Activated naive CD4-positive, alpha-beta T cell treated with anti-CD3 and anti-CD28 coated beads for 36 hours (primary cell): ENCODE measurements at regions of chr17 and their contacts with region 1.

Region 1: DNA sequence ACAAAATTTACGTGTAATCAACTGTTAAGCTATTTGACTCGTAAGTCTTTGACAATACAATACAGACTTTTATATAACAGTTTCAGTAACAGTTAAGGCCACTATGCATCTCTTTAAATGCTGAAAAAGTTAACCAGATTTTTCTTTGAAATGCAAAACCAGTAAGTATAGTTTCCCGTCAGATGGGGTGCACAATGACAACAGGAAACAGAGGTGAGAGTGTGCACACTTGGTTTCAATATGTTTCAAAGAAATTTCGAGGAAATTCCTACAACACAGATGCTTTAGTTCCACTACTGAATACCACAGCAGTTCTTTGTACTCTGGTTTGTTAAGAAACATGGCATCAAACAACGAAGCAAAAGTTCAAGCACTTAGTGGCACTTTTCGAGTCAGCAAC is 48.4 kb downstream of the RNF157 start:
- DNase-seq: peak; percentile 73
- H3K4me3 Mint-ChIP-seq: peak overlapping the region; percentile 66
- H3K27ac Mint-ChIP-seq: peak overlapping the region; percentile 98
- H3K4me1 Mint-ChIP-seq: peaks cover 87% of the 10 kb centered on the region
- H3K27me3 Mint-ChIP-seq: no peaks in the 10 kb centered on the region

Region 2: GRCh38 chr17:76072148-76072858 is 119.6 kb before region 1 on chr17 and contains the start of gene SRP68:
- CTCF ChIA-PET with region 1: no interaction called
- intact Hi-C with region 1: loop called (anchors 1 kb)
- DNase-seq: peak; percentile 86
- H3K4me3 Mint-ChIP-seq: peak within 1 kb of the TSS; percentile 95
- H3K27ac Mint-ChIP-seq: peak within 1 kb of the TSS; percentile 98
- H3K4me1 Mint-ChIP-seq: peaks cover 49% of the 10 kb centered on the region
- H3K27me3 Mint-ChIP-seq: peaks cover 33% of the 10 kb centered on the region
- total RNA-seq, gene SRP68: 127 to 131 TPM

Region 3: DNA sequence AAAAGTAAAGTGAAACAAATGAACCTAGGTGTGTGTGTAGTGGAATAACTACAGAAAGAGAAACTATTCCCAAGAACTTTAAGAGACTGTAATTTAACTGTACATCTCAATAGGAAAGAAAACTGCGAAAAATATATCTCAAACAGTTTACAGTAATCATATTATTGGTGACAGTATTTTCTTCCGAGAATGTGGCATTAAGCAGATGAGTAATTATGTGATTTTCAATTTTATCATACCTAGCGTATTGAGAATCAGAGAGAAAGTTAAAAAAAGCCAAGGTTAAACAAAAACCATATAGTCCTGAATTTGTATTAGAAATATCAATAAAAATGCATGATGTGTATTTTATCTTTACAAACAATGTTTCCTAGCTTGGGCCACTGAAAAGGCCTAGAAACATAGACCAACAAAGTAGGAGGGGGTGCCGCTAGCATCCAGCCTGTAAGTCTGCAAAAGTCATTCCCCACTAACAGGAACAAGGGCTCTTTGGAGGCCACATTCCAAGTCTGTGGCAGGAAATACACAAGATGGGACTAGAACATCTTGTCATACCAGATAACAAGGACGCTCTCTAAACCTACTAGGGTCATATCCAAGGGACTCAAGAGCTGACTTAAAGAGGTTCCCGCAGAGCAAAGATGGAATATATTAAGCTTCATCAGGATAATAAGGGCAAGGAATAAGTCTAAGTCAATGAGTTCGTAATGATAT is 27.9 kb after region 1 on chr17:
- CTCF ChIA-PET with region 1: interaction called, 10 read pairs
- intact Hi-C with region 1: loop called (anchors 2 kb)
- DNase-seq: no peak
- H3K4me3 Mint-ChIP-seq: peak overlapping the region; percentile 24
- H3K27ac Mint-ChIP-seq: peak overlapping the region; percentile 44
- H3K4me1 Mint-ChIP-seq: peaks cover 58% of the 10 kb centered on the region
- H3K27me3 Mint-ChIP-seq: no peaks in the 10 kb centered on the region

Region 4: GRCh38 chr17:76246080-76247066 is 54.5 kb after region 1 on chr17:
- CTCF ChIA-PET with region 1: interaction called, 3 read pairs
- intact Hi-C with region 1: loop called (anchors 1 kb)
- DNase-seq: peak; percentile 86
- H3K4me3 Mint-ChIP-seq: peak overlapping the region; percentile 55
- H3K27ac Mint-ChIP-seq: peak overlapping the region; percentile 79
- H3K4me1 Mint-ChIP-seq: peaks cover 69% of the 10 kb centered on the region
- H3K27me3 Mint-ChIP-seq: no peaks in the 10 kb centered on the region

Region 5: GRCh38 chr17:76271669-76272540 is 80.0 kb after region 1 on chr17:
- CTCF ChIA-PET with region 1: interaction called, 8 read pairs
- intact Hi-C with region 1: loop called (anchors 1 kb)
- DNase-seq: peak; percentile 97
- H3K4me3 Mint-ChIP-seq: peak overlapping the region; percentile 79
- H3K27ac Mint-ChIP-seq: peak overlapping the region; percentile 91
- H3K4me1 Mint-ChIP-seq: peaks cover 67% of the 10 kb centered on the region
- H3K27me3 Mint-ChIP-seq: no peaks in the 10 kb centered on the region

Region 6: DNA sequence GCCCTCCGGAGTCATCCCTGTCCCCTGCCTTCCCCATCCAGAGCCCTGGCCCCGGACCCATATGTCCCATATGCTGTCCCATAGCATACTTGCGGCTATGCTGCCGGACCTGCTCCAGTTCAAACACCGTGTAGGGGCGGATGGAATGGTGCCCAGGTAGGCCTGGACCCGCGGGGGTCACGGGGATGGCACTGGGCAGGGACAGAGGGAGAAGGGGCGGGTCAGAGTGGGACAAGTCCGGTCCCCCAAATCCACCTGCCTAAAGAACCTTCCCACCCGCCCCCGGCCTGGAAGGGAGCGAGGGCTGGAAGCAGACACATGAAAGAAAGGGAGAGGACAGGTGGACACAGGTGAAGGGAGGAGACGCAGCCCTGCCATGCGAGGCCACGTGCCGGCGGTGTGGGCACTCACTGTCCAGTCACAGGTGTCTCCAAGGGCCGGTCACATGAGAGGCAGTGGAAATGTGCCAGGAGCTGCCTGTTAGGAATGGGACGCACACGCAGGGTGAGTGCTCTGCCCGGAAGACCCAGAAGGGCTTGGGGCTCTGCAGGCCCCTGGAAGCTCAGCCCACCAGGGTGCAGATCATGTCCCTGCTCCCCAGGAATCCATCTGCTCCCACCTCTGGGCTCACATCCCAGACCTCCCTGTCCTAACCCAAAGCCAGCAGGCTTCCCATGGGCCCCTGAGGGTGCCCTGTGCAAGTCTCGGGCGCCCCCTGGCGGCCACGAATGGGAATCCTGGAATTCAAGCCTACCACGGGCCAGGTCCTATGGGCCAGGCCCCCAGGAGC is 87.3 kb after region 1 on chr17:
- CTCF ChIA-PET with region 1: interaction called, 12 read pairs
- intact Hi-C with region 1: no loop called
- DNase-seq: peak; percentile 91
- H3K4me3 Mint-ChIP-seq: no peak overlapping the region
- H3K27ac Mint-ChIP-seq: no peak overlapping the region
- H3K4me1 Mint-ChIP-seq: peaks cover 28% of the 10 kb centered on the region
- H3K27me3 Mint-ChIP-seq: no peaks in the 10 kb centered on the region

Region 7: DNA sequence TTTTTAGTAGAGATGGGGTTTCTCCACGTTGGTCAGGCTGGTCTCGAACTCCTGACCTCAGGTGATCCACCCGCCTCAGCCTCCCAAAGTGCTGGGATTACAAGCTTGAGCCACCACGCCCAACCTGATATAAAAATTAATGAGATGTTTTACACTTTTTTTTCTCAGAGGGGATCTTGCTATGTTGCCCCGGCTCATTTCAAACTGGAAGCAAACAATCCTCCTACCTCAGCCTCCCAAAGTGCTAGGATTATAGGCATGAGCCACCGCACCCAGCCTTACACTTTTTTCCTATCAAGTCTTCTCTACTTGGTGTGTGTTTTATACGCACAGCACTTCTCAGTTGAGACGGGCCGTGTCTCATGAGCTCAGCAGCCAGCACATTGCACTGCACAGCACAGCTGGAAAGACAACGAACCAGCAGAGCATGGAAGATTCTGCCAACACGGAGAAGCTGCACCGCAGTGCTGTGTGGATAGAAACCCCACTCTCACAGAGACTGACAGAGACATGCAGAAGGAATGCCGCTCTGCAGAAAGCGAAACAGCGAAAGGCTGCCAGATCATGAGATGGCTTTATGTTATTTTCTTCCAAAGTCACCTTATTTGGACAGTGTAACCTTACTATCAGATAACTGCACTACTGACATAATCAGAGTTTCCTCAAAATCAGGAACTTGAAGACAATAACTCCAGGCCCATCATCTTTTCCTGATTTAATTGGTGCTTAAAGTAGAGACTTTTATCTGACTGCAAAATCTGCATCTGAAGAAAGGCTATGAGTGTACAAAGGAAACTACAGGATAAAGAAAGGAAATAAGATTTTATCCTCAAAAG is 122.7 kb after region 1 on chr17:
- CTCF ChIA-PET with region 1: no interaction called
- intact Hi-C with region 1: no loop called
- DNase-seq: no peak
- H3K4me3 Mint-ChIP-seq: no peak overlapping the region
- H3K27ac Mint-ChIP-seq: no peak overlapping the region
- H3K4me1 Mint-ChIP-seq: no peaks in the 10 kb centered on the region
- H3K27me3 Mint-ChIP-seq: no peaks in the 10 kb centered on the region

Region 8: GRCh38 chr17:76753061-76753961 is 561.4 kb after region 1 on chr17:
- CTCF ChIA-PET with region 1: no interaction called
- intact Hi-C with region 1: loop called (anchors 10 kb)
- DNase-seq: peak; percentile 70
- H3K4me3 Mint-ChIP-seq: peak overlapping the region; percentile 83
- H3K27ac Mint-ChIP-seq: peak overlapping the region; percentile 100
- H3K4me1 Mint-ChIP-seq: peaks cover 22% of the 10 kb centered on the region
- H3K27me3 Mint-ChIP-seq: no peaks in the 10 kb centered on the region